CD8-positive, alpha-beta T cell (primary cell): ENCODE measurements at regions of chrX and their contacts with region 1.

Region 1: GRCh38 chrX:153662266-153662665 is 11.3 kb downstream of the PNCK start:
- DNase-seq: peak; percentile 31 to 74 (median 62)
- ATAC-seq: no peak
- H3K4me3 ChIP-seq: peak overlapping the region in 1 of 2 experiments; percentile 18
- H3K4me3 Mint-ChIP-seq: peak overlapping the region; percentile 57
- H3K27ac ChIP-seq: no peak overlapping the region
- H3K27ac Mint-ChIP-seq: no peak overlapping the region
- H3K4me1 ChIP-seq: no peaks in the 10 kb centered on the region
- H3K4me1 Mint-ChIP-seq: peaks cover 3% of the 10 kb centered on the region
- H3K27me3 ChIP-seq: peaks cover 0 to 3% of the 10 kb centered on the region in 2 experiments
- H3K27me3 Mint-ChIP-seq: peaks cover 9% of the 10 kb centered on the region
- CTCF ChIP-seq: peak; percentile 21

Region 2: DNA sequence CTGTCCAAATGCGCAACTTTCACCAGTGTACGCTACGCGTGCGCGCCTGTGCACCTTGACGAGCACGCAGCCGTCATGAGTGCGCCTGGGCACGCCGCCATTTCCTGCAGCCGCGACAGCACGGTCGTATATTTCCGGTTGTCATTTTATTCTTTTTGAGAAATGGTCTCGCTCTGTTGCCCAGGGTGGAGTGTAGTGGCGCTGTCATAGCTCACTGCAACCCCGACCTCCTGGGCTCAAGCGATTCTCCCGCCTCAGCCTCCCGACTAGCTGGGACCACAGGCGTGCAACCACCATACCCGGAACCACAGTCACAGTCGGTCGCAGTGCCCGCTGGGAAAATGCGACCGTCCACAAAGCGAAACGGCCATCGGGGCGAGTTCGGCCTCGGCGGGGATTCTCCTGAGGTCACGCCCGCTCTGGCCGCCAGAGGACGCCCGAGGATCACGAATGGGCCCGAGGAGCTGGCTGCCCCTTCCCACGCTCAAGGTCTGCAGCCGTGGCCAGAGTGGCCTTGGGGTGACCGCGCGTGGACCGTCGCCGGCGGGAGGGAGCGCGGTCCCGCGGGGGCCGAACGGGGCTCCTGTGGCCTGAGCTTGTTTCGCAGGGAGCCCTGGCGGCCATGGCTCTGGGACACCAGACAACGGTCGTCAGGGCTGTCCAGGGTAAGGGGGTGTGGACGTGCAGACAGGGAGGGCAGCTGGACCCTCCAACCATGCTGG is 629.7 kb before region 1 on chrX:
- CTCF ChIA-PET with region 1: interaction called, 9 read pairs
- POLR2A ChIA-PET with region 1: no interaction called
- intact Hi-C with region 1: loop called (anchors 5 kb)
- DNase-seq: peak; percentile 33 to 80 (median 64)
- ATAC-seq: peak; percentile 73
- H3K4me3 ChIP-seq: peak overlapping the region; percentile 50 to 52
- H3K4me3 Mint-ChIP-seq: peak overlapping the region; percentile 86
- H3K27ac ChIP-seq: peak overlapping the region; percentile 42 to 51
- H3K27ac Mint-ChIP-seq: peak overlapping the region; percentile 91
- H3K4me1 ChIP-seq: peaks cover 10% of the 10 kb centered on the region
- H3K4me1 Mint-ChIP-seq: peaks cover 17% of the 10 kb centered on the region
- H3K27me3 ChIP-seq: no peaks in the 10 kb centered on the region
- H3K27me3 Mint-ChIP-seq: no peaks in the 10 kb centered on the region
- CTCF ChIP-seq: peak; percentile 66

Region 3: GRCh38 chrX:153539171-153539978 is 122.9 kb before region 1 on chrX:
- CTCF ChIA-PET with region 1: interaction called, 79 read pairs
- POLR2A ChIA-PET with region 1: no interaction called
- intact Hi-C with region 1: loop called in 1 of 2 experiments (anchors 1 kb)
- DNase-seq: peak; percentile 19 to 75 (median 50)
- ATAC-seq: peak; percentile 82
- H3K4me3 ChIP-seq: no peak overlapping the region
- H3K4me3 Mint-ChIP-seq: no peak overlapping the region
- H3K27ac ChIP-seq: no peak overlapping the region
- H3K27ac Mint-ChIP-seq: no peak overlapping the region
- H3K4me1 ChIP-seq: no peaks in the 10 kb centered on the region
- H3K4me1 Mint-ChIP-seq: no peaks in the 10 kb centered on the region
- H3K27me3 ChIP-seq: no peaks in the 10 kb centered on the region
- H3K27me3 Mint-ChIP-seq: no peaks in the 10 kb centered on the region
- CTCF ChIP-seq: peak; percentile 51

Region 4: GRCh38 chrX:153609917-153610428 is 52.3 kb before region 1 on chrX:
- CTCF ChIA-PET with region 1: interaction called, 14 read pairs
- POLR2A ChIA-PET with region 1: no interaction called
- intact Hi-C with region 1: loop called in 1 of 2 experiments (anchors 1 kb)
- DNase-seq: peak; percentile 57 to 87 (median 77)
- ATAC-seq: peak; percentile 89
- H3K4me3 ChIP-seq: peak overlapping the region; percentile 44 to 58
- H3K4me3 Mint-ChIP-seq: peak overlapping the region; percentile 87
- H3K27ac ChIP-seq: no peak overlapping the region
- H3K27ac Mint-ChIP-seq: peak overlapping the region; percentile 77
- H3K4me1 ChIP-seq: peaks cover 12% of the 10 kb centered on the region
- H3K4me1 Mint-ChIP-seq: peaks cover 18% of the 10 kb centered on the region
- H3K27me3 ChIP-seq: no peaks in the 10 kb centered on the region
- H3K27me3 Mint-ChIP-seq: no peaks in the 10 kb centered on the region
- CTCF ChIP-seq: peak; percentile 59

Region 5: GRCh38 chrX:155009994-155010472 is 1347.8 kb after region 1 on chrX:
- CTCF ChIA-PET with region 1: no interaction called
- POLR2A ChIA-PET with region 1: no interaction called
- intact Hi-C with region 1: no loop called
- DNase-seq: no peak
- ATAC-seq: no peak
- H3K4me3 ChIP-seq: no peak overlapping the region
- H3K4me3 Mint-ChIP-seq: no peak overlapping the region
- H3K27ac ChIP-seq: no peak overlapping the region
- H3K27ac Mint-ChIP-seq: no peak overlapping the region
- H3K4me1 ChIP-seq: no peaks in the 10 kb centered on the region
- H3K4me1 Mint-ChIP-seq: no peaks in the 10 kb centered on the region
- H3K27me3 ChIP-seq: no peaks in the 10 kb centered on the region
- H3K27me3 Mint-ChIP-seq: no peaks in the 10 kb centered on the region
- CTCF ChIP-seq: no peak